Right cardiac atrium (tissue), 5 donors: ENCODE measurements at regions of chr10 and their contacts with region 1.

Region 1: DNA sequence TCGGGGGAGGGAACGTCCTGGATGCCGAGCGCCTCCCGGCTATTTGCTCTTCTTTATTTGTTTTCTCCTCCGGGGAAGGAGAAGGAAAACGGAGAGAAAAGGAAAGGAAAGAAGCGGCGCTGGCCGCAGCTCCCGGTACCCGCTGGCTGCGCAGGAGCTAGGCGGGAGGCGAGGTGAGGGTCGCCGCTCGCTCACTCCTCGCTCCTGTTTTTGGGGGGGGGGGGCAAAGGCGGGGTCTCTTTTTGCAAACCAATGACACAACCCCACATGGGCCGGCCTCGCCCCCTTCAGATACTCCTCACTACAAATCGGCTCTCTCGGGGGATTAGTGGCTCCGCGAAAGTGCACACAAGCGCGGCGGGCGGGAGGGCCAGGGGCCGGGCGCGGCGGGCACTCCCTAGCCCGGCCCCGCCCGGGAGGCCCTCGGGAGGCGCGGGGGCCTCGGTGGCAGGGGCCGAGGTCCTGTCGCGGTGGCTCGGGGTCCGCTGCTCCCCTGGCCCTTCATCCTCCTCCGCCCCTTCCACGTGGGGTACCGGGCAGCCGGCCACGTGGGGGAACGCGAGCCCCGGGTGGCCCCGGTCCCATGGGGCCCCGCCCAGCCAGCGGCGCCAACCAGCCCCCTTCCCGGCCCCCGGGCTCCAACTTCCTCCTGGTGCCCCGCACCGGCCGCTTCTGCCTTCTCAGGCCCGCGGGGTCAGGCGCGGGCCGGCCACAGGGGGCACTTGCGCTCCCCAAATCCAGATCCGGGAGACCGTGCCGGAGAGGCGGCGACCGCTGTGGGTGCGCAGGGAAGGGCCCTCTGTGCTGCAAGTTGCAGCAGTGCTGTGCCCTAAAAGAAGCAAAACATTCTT is 718 bp upstream of the CTBP2 start:
- DNase-seq: peak; percentile 79 to 93 (median 90)
- ATAC-seq: peak; percentile 76 to 77
- H3K4me3 ChIP-seq: peak overlapping the region; percentile 99
- H3K27ac ChIP-seq: peak overlapping the region; percentile 98
- H3K4me1 ChIP-seq: peaks cover 2% of the 10 kb centered on the region
- H3K27me3 ChIP-seq: no peaks in the 10 kb centered on the region

Region 2: DNA sequence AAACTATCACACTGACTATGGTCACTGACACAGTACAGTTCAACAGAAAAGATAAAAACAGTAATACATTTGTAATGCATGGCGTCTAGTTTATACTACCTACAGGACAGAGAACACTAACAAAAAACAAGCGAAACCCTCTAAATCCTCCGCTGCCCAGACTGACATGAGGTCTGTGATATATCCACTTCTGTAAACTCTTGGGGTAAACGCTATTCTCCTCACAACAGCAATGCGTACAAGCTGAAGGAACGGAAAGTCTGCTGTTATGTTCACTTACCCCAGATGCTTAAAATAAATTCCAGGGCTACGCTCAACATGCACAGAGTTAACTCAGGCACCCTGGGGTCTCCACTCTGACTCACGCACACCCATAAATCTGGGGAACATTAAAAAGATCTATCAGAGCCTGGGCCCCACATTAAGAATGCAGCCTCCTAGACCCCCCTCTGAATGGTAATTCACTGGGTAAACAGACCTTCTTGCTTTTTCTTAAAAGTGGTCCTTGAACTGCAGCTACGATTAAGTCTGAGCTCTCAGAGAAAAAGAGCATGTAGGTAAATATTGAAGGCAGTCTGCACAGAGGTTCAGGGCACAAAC is 106.3 kb before region 1 on chr10:
- intact Hi-C with region 1: loop called in 2 of 4 experiments (anchors 5 kb)
- DNase-seq: no peak
- ATAC-seq: no peak
- H3K4me3 ChIP-seq: no peak overlapping the region
- H3K27ac ChIP-seq: no peak overlapping the region
- H3K4me1 ChIP-seq: peaks cover 34% of the 10 kb centered on the region
- H3K27me3 ChIP-seq: no peaks in the 10 kb centered on the region

Region 3: DNA sequence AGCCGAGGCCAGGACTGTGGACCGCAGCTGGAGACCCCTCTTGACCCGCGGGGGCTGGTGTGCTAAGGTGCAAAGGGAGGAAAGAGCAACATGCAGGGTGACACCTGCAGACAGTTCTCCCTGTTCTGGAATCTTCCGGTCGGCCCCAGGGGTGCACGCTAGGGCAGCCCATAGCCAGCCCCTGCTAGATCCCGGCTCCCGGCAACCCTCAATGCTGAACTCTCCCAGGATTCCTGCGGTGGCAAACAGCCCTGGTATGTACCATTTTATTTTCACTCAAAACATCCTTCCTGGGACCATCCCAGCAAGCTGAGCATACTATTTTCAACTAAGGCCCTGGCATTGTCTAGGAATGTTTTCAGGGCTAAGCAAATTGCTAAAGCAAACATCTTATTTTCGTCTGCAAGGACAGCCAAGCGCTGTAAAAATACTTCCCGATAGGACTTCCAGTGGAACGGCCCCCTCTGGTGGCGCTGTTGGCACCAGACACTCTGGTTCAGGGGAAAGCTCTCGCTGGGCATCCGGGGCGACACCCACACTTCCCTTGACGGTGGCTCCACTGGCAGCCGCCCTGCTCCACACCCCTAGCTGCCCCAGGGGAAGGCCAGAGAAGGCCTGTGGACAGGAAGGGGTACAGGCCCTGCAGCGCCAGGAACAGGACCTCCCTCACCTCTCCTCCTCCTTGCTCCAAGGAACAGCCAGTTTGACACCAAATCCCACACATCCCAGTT is 100.1 kb before region 1 on chr10:
- intact Hi-C with region 1: loop called in 2 of 4 experiments (anchors 5 to 10 kb)
- DNase-seq: peak; percentile 86 to 95 (median 94)
- ATAC-seq: peak; percentile 64 to 78
- H3K4me3 ChIP-seq: no peak overlapping the region
- H3K27ac ChIP-seq: peak overlapping the region; percentile 34
- H3K4me1 ChIP-seq: peaks cover 53% of the 10 kb centered on the region
- H3K27me3 ChIP-seq: no peaks in the 10 kb centered on the region

Region 4: GRCh38 chr10:125084191-125084613 is 76.9 kb before region 1 on chr10:
- intact Hi-C with region 1: loop called in 1 of 4 experiments (anchors 10 kb)
- DNase-seq: peak in 2 of 3 donors; percentile 67 to 72
- ATAC-seq: peak; percentile 52 to 86
- H3K4me3 ChIP-seq: no peak overlapping the region
- H3K27ac ChIP-seq: peak overlapping the region; percentile 95
- H3K4me1 ChIP-seq: peaks cover 22% of the 10 kb centered on the region
- H3K27me3 ChIP-seq: no peaks in the 10 kb centered on the region

Region 5: GRCh38 chr10:125102231-125102630 is 58.9 kb before region 1 on chr10:
- intact Hi-C with region 1: no loop called
- DNase-seq: peak in 2 of 3 donors; percentile 2 to 23
- ATAC-seq: no peak
- H3K4me3 ChIP-seq: no peak overlapping the region
- H3K27ac ChIP-seq: no peak overlapping the region
- H3K4me1 ChIP-seq: no peaks in the 10 kb centered on the region
- H3K27me3 ChIP-seq: no peaks in the 10 kb centered on the region

Region 6: GRCh38 chr10:125144693-125145623 is 16.1 kb before region 1 on chr10:
- intact Hi-C with region 1: no loop called
- DNase-seq: peak; percentile 47 to 72 (median 70)
- ATAC-seq: peak; percentile 43 to 59
- H3K4me3 ChIP-seq: no peak overlapping the region
- H3K27ac ChIP-seq: peak overlapping the region; percentile 28
- H3K4me1 ChIP-seq: peaks cover 39% of the 10 kb centered on the region
- H3K27me3 ChIP-seq: no peaks in the 10 kb centered on the region

Region 7: GRCh38 chr10:125337510-125337909 is 176.4 kb after region 1 on chr10:
- intact Hi-C with region 1: loop called in 1 of 4 experiments (anchors 10 kb)
- DNase-seq: no peak
- ATAC-seq: no peak
- H3K4me3 ChIP-seq: no peak overlapping the region
- H3K27ac ChIP-seq: no peak overlapping the region
- H3K4me1 ChIP-seq: no peaks in the 10 kb centered on the region
- H3K27me3 ChIP-seq: no peaks in the 10 kb centered on the region

Region 8: DNA sequence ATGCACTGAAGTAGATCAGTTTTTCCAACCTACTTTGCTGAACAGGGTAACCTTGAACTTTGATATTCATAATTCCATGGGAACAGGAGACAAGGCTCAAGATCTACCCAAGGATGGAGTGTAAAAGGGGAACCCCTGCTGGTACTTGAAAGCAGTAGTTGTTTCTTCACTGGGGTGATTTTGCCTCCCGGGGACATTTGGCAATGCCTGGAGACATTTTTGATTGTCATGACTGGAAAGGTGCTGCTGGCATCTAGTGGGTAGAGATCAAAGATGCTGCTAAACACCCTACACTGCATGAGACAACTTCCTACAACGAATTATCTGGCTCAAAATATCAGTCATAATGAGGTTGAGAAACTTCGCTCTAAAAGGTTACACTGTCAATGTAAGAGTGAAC is 214.1 kb after region 1 on chr10:
- intact Hi-C with region 1: loop called in 1 of 4 experiments (anchors 10 kb)
- DNase-seq: no peak
- ATAC-seq: peak; percentile 25 to 51
- H3K4me3 ChIP-seq: no peak overlapping the region
- H3K27ac ChIP-seq: no peak overlapping the region
- H3K4me1 ChIP-seq: no peaks in the 10 kb centered on the region
- H3K27me3 ChIP-seq: no peaks in the 10 kb centered on the region